B cell (primary cell): ENCODE measurements at regions of chr4 and their contacts with region 1.

Region 1: DNA sequence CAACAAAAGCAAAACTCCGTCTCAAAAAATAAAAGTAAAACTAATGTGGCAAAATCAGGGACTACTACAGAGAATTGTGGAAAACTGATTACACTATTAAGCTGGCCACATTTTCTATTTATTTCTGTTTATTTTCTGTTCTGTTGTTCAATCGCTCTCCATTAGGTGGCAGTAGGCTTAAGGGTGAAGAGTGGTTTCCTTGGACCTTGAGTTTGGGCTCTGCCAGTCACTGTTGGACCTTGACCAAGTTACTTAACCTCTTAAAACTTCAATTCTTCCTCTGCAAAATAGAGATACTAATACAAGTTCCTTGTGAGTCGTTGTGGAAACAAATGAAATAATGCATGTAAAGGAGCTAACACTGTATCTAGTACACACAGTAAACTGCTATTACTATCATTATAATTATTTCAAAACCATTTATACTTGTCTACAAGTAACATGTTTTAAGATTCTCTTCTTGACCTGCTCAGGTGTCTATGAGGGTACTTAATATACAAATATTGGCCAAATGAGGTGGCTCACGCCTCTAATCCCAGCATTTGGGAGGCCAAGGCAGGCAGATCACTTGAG is 15.2 kb downstream of the HSD17B11 start:
- DNase-seq: peak; percentile 60
- ATAC-seq: peak; percentile 51
- H3K4me3 ChIP-seq: no peak overlapping the region
- H3K4me3 Mint-ChIP-seq: no peak overlapping the region
- H3K27ac ChIP-seq: no peak overlapping the region
- H3K27ac Mint-ChIP-seq: no peak overlapping the region
- H3K4me1 ChIP-seq: no peaks in the 10 kb centered on the region
- H3K4me1 Mint-ChIP-seq: peaks cover 6% of the 10 kb centered on the region
- H3K27me3 ChIP-seq: no peaks in the 10 kb centered on the region
- H3K27me3 Mint-ChIP-seq: no peaks in the 10 kb centered on the region
- CTCF ChIP-seq: peak; percentile 82

Region 2: DNA sequence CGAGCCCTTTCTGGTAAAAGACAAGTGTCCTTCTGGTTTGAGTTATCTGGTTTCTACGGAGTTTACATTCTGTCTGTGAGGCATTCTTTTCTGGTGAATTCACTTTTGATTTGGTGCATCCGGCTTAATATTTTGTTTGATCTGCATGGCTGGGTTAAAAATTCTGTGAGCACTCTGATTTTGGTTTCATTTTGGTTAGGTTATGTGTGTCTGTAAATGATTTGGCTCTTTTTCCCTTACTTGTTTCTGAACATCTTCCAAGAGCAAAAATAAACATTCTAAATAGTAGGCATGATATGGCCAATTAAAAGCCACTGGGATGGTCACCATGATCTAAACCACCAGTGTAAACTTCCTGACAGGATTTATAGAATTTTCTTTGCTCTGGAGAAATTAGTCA is 867.4 kb before region 1 on chr4:
- CTCF ChIA-PET with region 1: no interaction called
- POLR2A ChIA-PET with region 1: no interaction called
- intact Hi-C with region 1: no loop called
- DNase-seq: no peak
- ATAC-seq: no peak
- H3K4me3 ChIP-seq: no peak overlapping the region
- H3K4me3 Mint-ChIP-seq: no peak overlapping the region
- H3K27ac ChIP-seq: no peak overlapping the region
- H3K27ac Mint-ChIP-seq: no peak overlapping the region
- H3K4me1 ChIP-seq: no peaks in the 10 kb centered on the region
- H3K4me1 Mint-ChIP-seq: no peaks in the 10 kb centered on the region
- H3K27me3 ChIP-seq: peaks cover 0 to 3% (median 0%) of the 10 kb centered on the region in 4 experiments
- H3K27me3 Mint-ChIP-seq: peaks cover 15% of the 10 kb centered on the region
- CTCF ChIP-seq: no peak

Region 3: GRCh38 chr4:87188048-87188447 is 187.8 kb before region 1 on chr4:
- CTCF ChIA-PET with region 1: no interaction called
- POLR2A ChIA-PET with region 1: no interaction called
- intact Hi-C with region 1: no loop called
- DNase-seq: no peak
- ATAC-seq: no peak
- H3K4me3 ChIP-seq: no peak overlapping the region
- H3K4me3 Mint-ChIP-seq: no peak overlapping the region
- H3K27ac ChIP-seq: no peak overlapping the region
- H3K27ac Mint-ChIP-seq: no peak overlapping the region
- H3K4me1 ChIP-seq: no peaks in the 10 kb centered on the region
- H3K4me1 Mint-ChIP-seq: peaks cover 3% of the 10 kb centered on the region
- H3K27me3 ChIP-seq: no peaks in the 10 kb centered on the region
- H3K27me3 Mint-ChIP-seq: no peaks in the 10 kb centered on the region
- CTCF ChIP-seq: no peak

Region 4: DNA sequence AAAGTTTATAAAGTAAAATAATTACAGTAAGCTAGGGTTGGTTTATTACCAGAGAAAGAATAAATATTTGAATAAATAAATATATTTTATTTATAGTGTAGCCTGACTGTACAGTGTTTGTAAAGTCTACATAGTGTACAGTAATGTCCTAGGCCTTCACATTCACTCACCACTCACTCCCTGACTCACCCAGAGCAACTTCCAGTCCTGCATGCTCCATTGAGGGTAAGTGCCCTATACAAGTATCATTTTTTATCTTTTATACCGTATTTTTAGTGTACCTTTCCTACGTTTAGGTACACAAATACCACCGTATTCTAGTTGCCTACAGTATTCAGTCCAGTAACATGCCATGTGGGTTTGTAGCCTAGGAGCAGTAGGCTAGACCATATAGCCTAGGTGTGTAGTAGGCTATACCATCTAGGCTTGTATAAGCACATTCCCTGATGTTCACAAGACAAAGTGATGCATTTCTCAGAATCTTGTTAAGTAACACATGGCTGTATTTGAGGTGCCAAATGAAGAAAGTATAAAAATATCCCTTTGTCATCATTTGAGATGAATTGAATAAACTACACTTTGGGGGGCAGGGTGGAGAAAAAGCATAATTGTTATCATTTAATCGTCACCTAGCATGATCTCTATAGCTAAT is 140.7 kb before region 1 on chr4:
- CTCF ChIA-PET with region 1: no interaction called
- POLR2A ChIA-PET with region 1: no interaction called
- intact Hi-C with region 1: no loop called
- DNase-seq: peak; percentile 12
- ATAC-seq: no peak
- H3K4me3 ChIP-seq: peak overlapping the region in 4 of 5 experiments; percentile 35 to 66 (median 44)
- H3K4me3 Mint-ChIP-seq: peak overlapping the region; percentile 74
- H3K27ac ChIP-seq: no peak overlapping the region
- H3K27ac Mint-ChIP-seq: no peak overlapping the region
- H3K4me1 ChIP-seq: peaks cover 0 to 6% of the 10 kb centered on the region in 2 donors
- H3K4me1 Mint-ChIP-seq: peaks cover 4% of the 10 kb centered on the region
- H3K27me3 ChIP-seq: no peaks in the 10 kb centered on the region
- H3K27me3 Mint-ChIP-seq: peaks cover 5% of the 10 kb centered on the region
- CTCF ChIP-seq: no peak

Region 5: GRCh38 chr4:87422104-87423052 is 46.6 kb after region 1 on chr4 and contains the start of gene NUDT9:
- CTCF ChIA-PET with region 1: interaction called, 23 read pairs
- POLR2A ChIA-PET with region 1: interaction called, 3 read pairs
- intact Hi-C with region 1: no loop called
- DNase-seq: peak; percentile 93
- ATAC-seq: peak; percentile 85
- H3K4me3 ChIP-seq: peak within 1 kb of the TSS; percentile 86 to 97 (median 89)
- H3K4me3 Mint-ChIP-seq: peak within 1 kb of the TSS; percentile 100
- H3K27ac ChIP-seq: peak within 1 kb of the TSS; percentile 80 to 92
- H3K27ac Mint-ChIP-seq: peak within 1 kb of the TSS; percentile 100
- H3K4me1 ChIP-seq: peaks cover 16 to 26% of the 10 kb centered on the region in 2 donors
- H3K4me1 Mint-ChIP-seq: peaks cover 40% of the 10 kb centered on the region
- H3K27me3 ChIP-seq: no peaks in the 10 kb centered on the region
- H3K27me3 Mint-ChIP-seq: no peaks in the 10 kb centered on the region
- CTCF ChIP-seq: no peak
- total RNA-seq, gene NUDT9: 17.5 and 21.5 TPM in 2 replicates

Region 6: DNA sequence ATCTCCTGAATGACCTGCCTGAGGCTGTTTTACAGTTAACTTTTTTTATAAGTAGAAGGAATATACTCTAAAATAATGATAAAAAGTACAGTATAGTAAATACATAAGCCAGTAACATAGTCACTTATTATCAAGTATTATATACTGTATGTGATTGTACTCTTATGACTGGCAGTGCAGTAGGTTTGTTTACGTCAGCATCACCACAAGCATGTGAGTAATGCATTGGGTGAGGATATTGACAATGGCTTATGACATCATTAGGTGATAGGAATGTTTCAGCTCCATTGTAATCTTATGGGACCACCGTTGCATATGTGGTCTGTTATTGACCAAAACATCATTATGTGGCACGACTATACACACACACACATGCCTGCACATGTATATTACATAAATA is 67.1 kb after region 1 on chr4:
- CTCF ChIA-PET with region 1: interaction called, 12 read pairs
- POLR2A ChIA-PET with region 1: no interaction called
- intact Hi-C with region 1: no loop called
- DNase-seq: no peak
- ATAC-seq: no peak
- H3K4me3 ChIP-seq: no peak overlapping the region
- H3K4me3 Mint-ChIP-seq: no peak overlapping the region
- H3K27ac ChIP-seq: no peak overlapping the region
- H3K27ac Mint-ChIP-seq: no peak overlapping the region
- H3K4me1 ChIP-seq: no peaks in the 10 kb centered on the region
- H3K4me1 Mint-ChIP-seq: no peaks in the 10 kb centered on the region
- H3K27me3 ChIP-seq: no peaks in the 10 kb centered on the region
- H3K27me3 Mint-ChIP-seq: no peaks in the 10 kb centered on the region
- CTCF ChIP-seq: no peak

Region 7: DNA sequence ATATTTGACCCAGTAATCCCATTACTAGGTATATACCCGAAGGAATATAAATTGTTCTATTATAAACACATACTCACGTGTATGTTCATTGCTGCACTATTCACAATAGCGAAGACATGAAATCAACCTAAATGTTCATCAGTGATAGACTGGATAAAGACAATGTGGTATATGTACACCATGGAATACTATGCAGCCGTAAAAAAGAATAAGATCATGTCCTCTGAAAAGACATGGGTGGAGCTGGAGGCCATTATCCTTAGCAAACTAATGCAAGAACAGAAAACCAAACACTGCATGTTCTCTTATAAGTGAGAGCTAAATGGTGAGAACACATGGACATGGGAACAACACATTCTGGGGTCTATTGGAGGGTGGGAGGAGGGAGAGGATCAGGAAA is 83.1 kb after region 1 on chr4:
- CTCF ChIA-PET with region 1: interaction called, 269 read pairs
- POLR2A ChIA-PET with region 1: no interaction called
- intact Hi-C with region 1: no loop called
- DNase-seq: no peak
- ATAC-seq: no peak
- H3K4me3 ChIP-seq: no peak overlapping the region
- H3K4me3 Mint-ChIP-seq: no peak overlapping the region
- H3K27ac ChIP-seq: no peak overlapping the region
- H3K27ac Mint-ChIP-seq: no peak overlapping the region
- H3K4me1 ChIP-seq: no peaks in the 10 kb centered on the region
- H3K4me1 Mint-ChIP-seq: no peaks in the 10 kb centered on the region
- H3K27me3 ChIP-seq: no peaks in the 10 kb centered on the region
- H3K27me3 Mint-ChIP-seq: no peaks in the 10 kb centered on the region
- CTCF ChIP-seq: no peak

Region 8: GRCh38 chr4:87465739-87466366 is 90.0 kb after region 1 on chr4:
- CTCF ChIA-PET with region 1: interaction called, 269 read pairs
- POLR2A ChIA-PET with region 1: no interaction called
- intact Hi-C with region 1: loop called (anchors 1 kb)
- DNase-seq: peak; percentile 59
- ATAC-seq: no peak
- H3K4me3 ChIP-seq: no peak overlapping the region
- H3K4me3 Mint-ChIP-seq: no peak overlapping the region
- H3K27ac ChIP-seq: no peak overlapping the region
- H3K27ac Mint-ChIP-seq: no peak overlapping the region
- H3K4me1 ChIP-seq: no peaks in the 10 kb centered on the region
- H3K4me1 Mint-ChIP-seq: no peaks in the 10 kb centered on the region
- H3K27me3 ChIP-seq: no peaks in the 10 kb centered on the region
- H3K27me3 Mint-ChIP-seq: no peaks in the 10 kb centered on the region
- CTCF ChIP-seq: peak; percentile 92

Region 9: DNA sequence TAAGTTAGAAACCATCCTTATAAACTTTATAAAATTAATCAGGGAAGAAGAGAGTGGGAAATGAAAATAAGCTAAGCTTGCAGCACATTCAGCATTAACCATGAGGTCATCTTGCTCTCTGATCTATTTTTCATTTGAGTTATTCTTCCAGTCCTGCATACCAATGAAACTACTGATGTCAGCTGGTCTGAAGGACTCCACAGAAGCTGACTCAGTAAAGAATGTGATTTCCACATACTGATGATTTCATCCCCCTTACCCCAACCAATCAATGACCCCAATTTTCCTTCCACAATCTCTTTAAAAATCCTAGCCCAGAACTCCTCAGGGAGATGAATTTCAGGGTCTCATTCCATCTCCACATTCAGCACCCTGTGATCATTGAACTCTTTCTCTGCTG is 213.7 kb after region 1 on chr4:
- CTCF ChIA-PET with region 1: no interaction called
- POLR2A ChIA-PET with region 1: no interaction called
- intact Hi-C with region 1: no loop called
- DNase-seq: no peak
- ATAC-seq: no peak
- H3K4me3 ChIP-seq: no peak overlapping the region
- H3K4me3 Mint-ChIP-seq: no peak overlapping the region
- H3K27ac ChIP-seq: no peak overlapping the region
- H3K27ac Mint-ChIP-seq: no peak overlapping the region
- H3K4me1 ChIP-seq: no peaks in the 10 kb centered on the region
- H3K4me1 Mint-ChIP-seq: no peaks in the 10 kb centered on the region
- H3K27me3 ChIP-seq: no peaks in the 10 kb centered on the region
- H3K27me3 Mint-ChIP-seq: no peaks in the 10 kb centered on the region
- CTCF ChIP-seq: no peak